HAP-1 (cell line): ENCODE measurements at regions of chr2 and their contacts with region 1.

Region 1: GRCh38 chr2:138180692-138181386 is 216.6 kb downstream of the HNMT start:
- DNase-seq: peak; percentile 56 to 69
- H3K4me3 ChIP-seq: no peak overlapping the region
- H3K4me1 ChIP-seq: peaks cover 21% of the 10 kb centered on the region
- H3K27me3 ChIP-seq: no peaks in the 10 kb centered on the region

Region 2: DNA sequence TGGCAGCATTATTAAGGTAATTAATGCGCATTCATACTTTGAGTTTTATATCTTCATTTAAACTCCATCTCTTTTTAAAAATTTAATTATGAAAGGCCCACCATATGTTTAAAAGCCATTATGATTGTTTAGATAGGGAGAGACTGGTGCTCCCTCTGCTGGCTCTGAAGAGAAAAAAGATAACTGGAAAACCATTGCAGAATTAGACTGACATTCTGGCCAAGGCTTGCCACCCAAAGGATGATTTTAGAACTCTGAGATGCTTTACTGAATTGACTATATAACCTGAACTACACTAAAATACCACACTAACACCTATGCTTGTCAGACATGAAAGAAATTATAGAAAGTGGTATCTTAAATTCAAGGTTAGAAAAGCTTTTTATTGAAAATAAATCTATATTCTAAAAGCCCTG is 193.2 kb after region 1 on chr2:
- in situ Hi-C with region 1: loop called (anchors 25 kb)
- DNase-seq: peak; percentile 48 to 74
- H3K4me3 ChIP-seq: no peak overlapping the region
- H3K4me1 ChIP-seq: no peaks in the 10 kb centered on the region
- H3K27me3 ChIP-seq: no peaks in the 10 kb centered on the region

Region 3: DNA sequence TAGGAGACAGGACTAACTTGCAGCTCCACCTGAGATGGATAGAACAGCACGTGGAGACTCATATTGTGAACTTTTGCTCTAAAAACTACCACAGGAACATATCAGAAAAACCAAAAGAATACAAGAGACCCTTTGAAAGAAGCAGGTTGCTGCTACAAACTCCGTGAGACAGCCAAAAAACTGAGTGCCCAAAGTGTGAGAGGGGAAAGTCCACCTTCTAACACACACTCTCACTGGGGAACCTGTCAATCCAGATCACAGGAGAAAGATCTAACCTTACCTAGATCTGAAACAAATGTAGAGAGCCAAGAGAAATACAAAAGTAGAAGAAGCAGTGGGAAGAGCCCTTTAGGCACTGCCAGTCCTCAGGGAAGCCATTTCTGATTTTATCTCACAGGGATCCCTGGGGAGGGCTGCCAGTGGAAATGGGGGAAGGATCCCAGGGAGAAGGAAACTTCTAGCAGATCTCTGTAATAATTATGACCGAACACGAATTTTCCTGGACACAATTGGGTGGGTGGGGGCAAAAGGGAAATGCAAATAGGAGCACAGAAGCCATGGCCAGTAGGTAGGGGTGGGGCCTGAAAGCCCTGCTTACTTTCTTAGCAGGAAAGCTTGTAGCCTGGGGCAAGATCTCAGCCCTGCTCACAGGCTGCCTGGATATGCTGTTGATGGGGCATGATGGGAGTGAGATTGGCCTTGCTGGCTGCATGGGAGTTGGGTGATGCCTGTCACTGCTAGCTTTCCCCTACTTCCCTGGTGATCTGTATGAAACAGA is 274.6 kb after region 1 on chr2:
- in situ Hi-C with region 1: no loop called
- DNase-seq: peak in 1 of 2 experiments; percentile 44
- H3K4me3 ChIP-seq: no peak overlapping the region
- H3K4me1 ChIP-seq: peaks cover 5% of the 10 kb centered on the region
- H3K27me3 ChIP-seq: no peaks in the 10 kb centered on the region

Region 4: GRCh38 chr2:138536302-138536701 is 355.5 kb after region 1 on chr2:
- in situ Hi-C with region 1: no loop called
- DNase-seq: no peak
- H3K4me3 ChIP-seq: no peak overlapping the region
- H3K4me1 ChIP-seq: peaks cover 6% of the 10 kb centered on the region
- H3K27me3 ChIP-seq: no peaks in the 10 kb centered on the region